Calu3 (cell line): ENCODE measurements at regions of chr1 and their contacts with region 1.

Region 1: DNA sequence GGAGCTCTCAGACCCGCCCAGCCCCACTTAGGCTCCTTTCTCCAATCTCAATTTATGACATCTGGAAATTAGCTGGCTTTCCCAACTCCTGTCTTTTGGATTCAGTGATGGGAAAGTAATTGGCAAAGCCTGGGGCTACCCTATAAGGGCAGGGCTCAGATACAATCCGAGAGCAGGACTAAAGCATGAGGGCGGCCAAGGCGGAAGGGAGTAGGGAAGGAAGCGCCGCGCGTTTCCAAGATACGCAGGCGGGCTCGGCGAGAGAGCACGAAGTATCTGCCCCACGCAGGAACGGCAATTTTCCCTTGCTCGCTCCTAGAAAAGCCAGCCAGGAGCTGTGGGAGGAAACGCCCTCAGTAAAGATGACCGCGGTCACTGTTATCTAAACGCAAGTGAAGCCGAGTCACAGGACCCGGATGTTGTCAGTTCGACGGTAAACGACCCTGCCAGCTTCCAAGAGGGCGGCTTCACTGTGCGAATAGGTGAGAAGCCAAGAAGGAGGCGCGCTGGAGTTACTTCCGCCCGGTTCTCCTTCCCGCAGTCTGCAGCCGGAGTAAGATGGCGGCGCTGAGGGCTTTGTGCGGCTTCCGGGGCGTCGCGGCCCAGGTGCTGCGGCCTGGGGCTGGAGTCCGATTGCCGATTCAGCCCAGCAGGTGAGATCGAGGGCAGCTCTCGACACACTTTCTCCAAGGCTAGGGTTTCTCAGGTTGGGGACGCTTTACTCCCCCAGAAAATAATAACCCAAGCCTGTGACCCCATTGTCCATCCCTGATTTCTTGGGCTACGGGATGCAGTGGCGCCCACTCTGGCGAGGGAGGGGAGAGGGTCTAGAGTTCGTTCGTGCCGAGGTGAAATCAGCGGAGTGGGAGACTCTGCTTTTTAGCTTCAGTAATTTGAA is at the start of gene NDUFS2:
- DNase-seq: peak; percentile 96
- H3K4me3 Mint-ChIP-seq: peak within 1 kb of the TSS; percentile 78
- H3K27ac Mint-ChIP-seq: peak within 1 kb of the TSS; percentile 71
- H3K4me1 Mint-ChIP-seq: peaks cover 48% of the 10 kb centered on the region
- H3K27me3 Mint-ChIP-seq: peaks cover 24% of the 10 kb centered on the region
- CTCF ChIP-seq: peak; percentile 34
- total RNA-seq, gene NDUFS2: 91.3 and 98.3 TPM in 2 replicates

Region 2: GRCh38 chr1:160451119-160451858 is 750.8 kb before region 1 on chr1:
- CTCF ChIA-PET with region 1: no interaction called
- intact Hi-C with region 1: no loop called
- DNase-seq: no peak
- H3K4me3 Mint-ChIP-seq: no peak overlapping the region
- H3K27ac Mint-ChIP-seq: no peak overlapping the region
- H3K4me1 Mint-ChIP-seq: no peaks in the 10 kb centered on the region
- H3K27me3 Mint-ChIP-seq: no peaks in the 10 kb centered on the region
- CTCF ChIP-seq: no peak

Region 3: DNA sequence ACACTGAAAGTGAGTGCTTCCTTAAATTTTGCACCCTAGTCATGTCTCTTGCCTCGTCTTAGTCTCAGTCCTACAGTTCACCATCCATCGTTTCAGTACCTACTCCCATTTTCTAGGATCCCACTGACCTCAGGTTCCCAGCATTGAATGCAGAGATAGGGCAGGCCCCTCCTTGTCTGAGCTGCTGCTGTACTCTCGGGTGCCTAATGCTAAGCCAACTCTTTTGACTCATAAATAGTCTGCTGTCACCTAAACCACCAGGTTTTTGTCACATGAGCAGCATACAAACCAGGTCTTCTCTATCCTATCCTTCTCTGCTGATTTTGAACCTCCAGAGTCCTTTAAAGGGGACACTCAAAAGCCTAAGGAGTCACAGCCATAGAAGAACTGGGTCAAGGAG is 135.4 kb before region 1 on chr1:
- CTCF ChIA-PET with region 1: no interaction called
- intact Hi-C with region 1: no loop called
- DNase-seq: no peak
- H3K4me3 Mint-ChIP-seq: no peak overlapping the region
- H3K27ac Mint-ChIP-seq: no peak overlapping the region
- H3K4me1 Mint-ChIP-seq: peaks cover 10% of the 10 kb centered on the region
- H3K27me3 Mint-ChIP-seq: peaks cover 9% of the 10 kb centered on the region
- CTCF ChIP-seq: no peak

Region 4: GRCh38 chr1:161749509-161750407 is 547.7 kb after region 1 on chr1 and contains the start of gene DUSP12:
- CTCF ChIA-PET with region 1: no interaction called
- intact Hi-C with region 1: loop called (anchors 10 kb)
- DNase-seq: peak; percentile 97
- H3K4me3 Mint-ChIP-seq: peak within 1 kb of the TSS; percentile 98
- H3K27ac Mint-ChIP-seq: peak within 1 kb of the TSS; percentile 90
- H3K4me1 Mint-ChIP-seq: peaks cover 29% of the 10 kb centered on the region
- H3K27me3 Mint-ChIP-seq: peaks cover 7% of the 10 kb centered on the region
- CTCF ChIP-seq: peak; percentile 21
- total RNA-seq, gene DUSP12: 34.4 and 38.3 TPM in 2 replicates